IMR-90 (cell line): ENCODE measurements at regions of chr22 and their contacts with region 1.

Region 1: GRCh38 chr22:39349967-39350726 is at the start of gene SYNGR1:
- DNase-seq: no peak
- ATAC-seq: peak; percentile 57
- H3K4me3 ChIP-seq: peak within 1 kb of the TSS; percentile 80
- H3K27ac ChIP-seq: peak within 1 kb of the TSS; percentile 54
- H3K4me1 ChIP-seq: peaks cover 15% of the 10 kb centered on the region
- H3K27me3 ChIP-seq: no peaks in the 10 kb centered on the region
- CTCF ChIP-seq: no peak
- POLR2A ChIP-seq: no peak
- RAD21 ChIP-seq: no peak
- total RNA-seq, gene SYNGR1: 6.3 and 19.7 TPM in 2 replicates

Region 2: GRCh38 chr22:39311444-39312400 is 38.4 kb before region 1 on chr22:
- CTCF ChIA-PET with region 1: no interaction called
- POLR2A ChIA-PET with region 1: no interaction called
- dilution Hi-C with region 1: no loop called
- in situ Hi-C with region 1: no loop called
- intact Hi-C with region 1: no loop called
- DNase-seq: no peak
- ATAC-seq: no peak
- H3K4me3 ChIP-seq: no peak overlapping the region
- H3K27ac ChIP-seq: no peak overlapping the region
- H3K4me1 ChIP-seq: peaks cover 30% of the 10 kb centered on the region
- H3K27me3 ChIP-seq: no peaks in the 10 kb centered on the region
- CTCF ChIP-seq: no peak
- POLR2A ChIP-seq: peak; percentile 27; the same call in 1 of the 2 replicates
- RAD21 ChIP-seq: no peak

Region 3: DNA sequence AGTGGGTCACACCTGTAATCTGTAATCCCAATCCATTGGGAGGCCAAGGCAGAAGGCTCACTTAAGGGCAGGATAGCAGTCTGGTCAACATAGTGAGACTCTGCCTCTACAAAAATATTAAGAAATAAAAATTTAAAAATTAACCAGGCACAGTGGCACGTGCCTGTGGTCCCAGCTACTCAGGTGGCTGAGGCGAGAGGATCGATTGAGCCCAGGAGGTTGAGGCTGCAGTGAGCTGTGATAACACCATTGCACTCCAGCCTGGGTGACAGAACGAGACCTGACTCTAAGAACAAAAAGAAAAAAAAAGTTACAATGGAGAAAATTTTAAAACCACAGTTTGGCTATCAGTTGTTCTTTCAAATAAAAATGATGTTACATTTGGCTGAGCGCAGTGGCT is 13.7 kb before region 1 on chr22:
- CTCF ChIA-PET with region 1: no interaction called
- POLR2A ChIA-PET with region 1: no interaction called
- dilution Hi-C with region 1: no loop called
- in situ Hi-C with region 1: no loop called
- intact Hi-C with region 1: no loop called
- DNase-seq: no peak
- ATAC-seq: no peak
- H3K4me3 ChIP-seq: no peak overlapping the region
- H3K27ac ChIP-seq: no peak overlapping the region
- H3K4me1 ChIP-seq: peaks cover 8% of the 10 kb centered on the region
- H3K27me3 ChIP-seq: no peaks in the 10 kb centered on the region
- CTCF ChIP-seq: no peak
- POLR2A ChIP-seq: no peak
- RAD21 ChIP-seq: no peak

Region 4: DNA sequence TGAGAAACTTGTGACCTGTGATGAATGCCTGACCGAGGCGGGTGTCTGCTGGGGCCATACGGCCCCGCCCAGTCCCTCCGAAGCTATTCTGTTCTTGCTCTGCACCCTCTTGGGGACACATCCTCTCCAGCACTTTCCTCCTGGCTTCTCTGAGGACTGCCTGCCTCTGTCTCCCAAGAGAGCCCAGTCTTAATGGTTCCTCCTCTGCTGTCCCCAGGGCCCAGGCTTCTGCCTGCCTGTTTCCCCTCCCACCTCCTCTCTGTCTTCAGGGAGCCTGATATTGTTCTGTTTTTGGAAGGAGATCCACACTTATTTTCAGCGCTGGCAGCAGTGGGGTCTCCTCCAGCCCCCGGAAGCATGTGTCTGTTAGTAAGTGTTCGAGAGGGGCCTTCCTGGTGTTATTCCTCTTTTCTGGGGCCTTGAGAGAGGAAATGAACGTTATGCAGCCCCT is 18.3 kb after region 1 on chr22:
- CTCF ChIA-PET with region 1: no interaction called
- POLR2A ChIA-PET with region 1: no interaction called
- dilution Hi-C with region 1: no loop called
- in situ Hi-C with region 1: no loop called
- intact Hi-C with region 1: no loop called
- DNase-seq: no peak
- ATAC-seq: no peak
- H3K4me3 ChIP-seq: no peak overlapping the region
- H3K27ac ChIP-seq: no peak overlapping the region
- H3K4me1 ChIP-seq: peaks cover 6% of the 10 kb centered on the region; the same call in 1 of the 2 replicates
- H3K27me3 ChIP-seq: no peaks in the 10 kb centered on the region
- CTCF ChIP-seq: no peak
- POLR2A ChIP-seq: no peak
- RAD21 ChIP-seq: no peak

Region 5: GRCh38 chr22:39405346-39406085 is 55.4 kb after region 1 on chr22:
- CTCF ChIA-PET with region 1: no interaction called
- POLR2A ChIA-PET with region 1: no interaction called
- dilution Hi-C with region 1: no loop called
- in situ Hi-C with region 1: no loop called
- intact Hi-C with region 1: loop called (anchors 1 kb)
- DNase-seq: peak; percentile 65
- ATAC-seq: peak; percentile 97
- H3K4me3 ChIP-seq: peak overlapping the region; percentile 25; the same call in 1 of the 2 replicates
- H3K27ac ChIP-seq: peak overlapping the region; percentile 46
- H3K4me1 ChIP-seq: peaks cover 10% of the 10 kb centered on the region
- H3K27me3 ChIP-seq: no peaks in the 10 kb centered on the region
- CTCF ChIP-seq: peak; percentile 33
- POLR2A ChIP-seq: no peak
- RAD21 ChIP-seq: no peak